ENCODE measurements at regions of chr15 and their contacts with region 1.

Region 1: DNA sequence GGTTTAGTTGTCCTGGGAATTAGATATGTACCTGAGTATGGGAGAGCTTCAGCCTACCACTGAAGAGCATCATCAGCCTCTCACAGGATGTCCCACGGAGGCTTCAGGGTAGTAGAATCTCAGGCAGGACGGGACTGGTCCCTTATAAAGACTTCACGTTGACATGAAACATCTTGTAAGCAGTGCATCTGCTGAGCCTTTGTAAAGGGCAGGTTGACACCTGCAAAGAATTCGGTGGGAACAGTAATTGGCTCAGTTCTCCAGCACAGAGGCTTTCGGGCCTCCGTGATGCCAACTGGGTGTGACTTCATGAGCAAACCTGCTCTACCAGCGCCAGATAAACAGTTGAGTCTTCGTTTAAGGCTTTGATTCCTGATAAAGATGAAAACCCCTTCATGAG is 26.9 kb upstream of the AVEN start:
- DNase-seq: no peak
- H3K4me3 Mint-ChIP-seq: no peak overlapping the region
- H3K27ac Mint-ChIP-seq: no peak overlapping the region
- H3K4me1 Mint-ChIP-seq: peaks cover 10% of the 10 kb centered on the region
- H3K27me3 Mint-ChIP-seq: no peaks in the 10 kb centered on the region

Region 2: GRCh38 chr15:34109797-34110663 is 44.1 kb after region 1 on chr15:
- CTCF ChIA-PET with region 1: interaction called, 29 read pairs
- DNase-seq: no peak
- H3K4me3 Mint-ChIP-seq: no peak overlapping the region
- H3K27ac Mint-ChIP-seq: no peak overlapping the region
- H3K4me1 Mint-ChIP-seq: peaks cover 5% of the 10 kb centered on the region
- H3K27me3 Mint-ChIP-seq: peaks cover 10% of the 10 kb centered on the region

Region 3: GRCh38 chr15:34209421-34210282 is 143.7 kb after region 1 on chr15 and contains the start of gene KATNBL1:
- CTCF ChIA-PET with region 1: interaction called, 16 read pairs
- DNase-seq: peak; percentile 98
- H3K4me3 Mint-ChIP-seq: peak within 1 kb of the TSS; percentile 92
- H3K27ac Mint-ChIP-seq: peak within 1 kb of the TSS; percentile 92
- H3K4me1 Mint-ChIP-seq: peaks cover 17% of the 10 kb centered on the region
- H3K27me3 Mint-ChIP-seq: peaks cover 8% of the 10 kb centered on the region

Region 4: DNA sequence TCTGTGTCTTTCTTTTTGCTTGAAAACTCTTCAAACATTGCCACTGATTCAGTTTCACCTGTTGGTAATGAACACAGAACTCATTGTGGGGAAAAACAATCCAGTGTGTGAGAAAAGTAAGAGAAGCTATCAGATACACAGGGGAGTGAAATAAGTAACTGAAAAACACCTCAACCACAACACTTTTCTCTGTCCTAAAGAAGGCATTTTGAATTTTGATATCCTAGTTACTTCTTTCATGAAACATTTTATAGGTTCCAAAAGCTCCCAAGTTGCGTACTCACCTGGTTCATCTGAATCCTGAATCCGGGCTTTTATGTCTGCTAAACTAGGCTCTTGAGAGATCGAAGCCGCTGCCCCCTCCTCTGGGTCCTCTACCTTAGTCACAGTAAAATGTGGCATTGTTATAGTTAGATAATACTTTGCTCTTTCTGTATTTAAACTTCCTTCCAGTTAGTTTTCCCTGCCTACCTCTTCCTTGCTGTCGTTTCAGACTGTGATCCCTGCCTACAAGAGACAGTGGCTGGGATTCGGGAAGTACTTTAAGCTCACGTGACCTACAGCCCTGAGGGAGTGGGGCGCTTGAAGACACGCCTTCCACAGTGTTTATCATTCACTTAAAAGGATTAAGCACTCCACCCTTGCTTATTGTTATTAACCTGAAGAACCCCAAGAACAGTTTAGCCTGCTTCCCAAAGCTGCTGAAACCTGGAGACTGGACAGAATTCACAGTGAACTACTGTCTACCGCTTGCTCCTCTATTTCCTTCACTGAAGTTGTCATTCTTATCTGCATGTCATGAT is 252.5 kb after region 1 on chr15:
- CTCF ChIA-PET with region 1: no interaction called
- DNase-seq: peak; percentile 51
- H3K4me3 Mint-ChIP-seq: peak overlapping the region; percentile 95
- H3K27ac Mint-ChIP-seq: peak overlapping the region; percentile 92
- H3K4me1 Mint-ChIP-seq: peaks cover 52% of the 10 kb centered on the region
- H3K27me3 Mint-ChIP-seq: no peaks in the 10 kb centered on the region

Region 5: GRCh38 chr15:34587717-34588674 is 522.1 kb after region 1 on chr15:
- CTCF ChIA-PET with region 1: interaction called, 10 read pairs
- DNase-seq: peak; percentile 77
- H3K4me3 Mint-ChIP-seq: peak overlapping the region; percentile 64
- H3K27ac Mint-ChIP-seq: peak overlapping the region; percentile 51
- H3K4me1 Mint-ChIP-seq: peaks cover 15% of the 10 kb centered on the region
- H3K27me3 Mint-ChIP-seq: peaks cover 38% of the 10 kb centered on the region

Measured in activated naive CD4-positive, alpha-beta T cell treated with anti-CD3 and anti-CD28 coated beads, Interleukin-2, amount 10 ng/mL, durations not matched to agents 7 days and 5 days (primary cell).